Mammary epithelial cell (primary cell): ENCODE measurements at regions of chr4 and their contacts with region 1.

Region 1: GRCh38 chr4:54233277-54233696 is 4.2 kb downstream of the PDGFRA start:
- DNase-seq: peak; percentile 81
- H3K4me3 ChIP-seq: peak overlapping the region; percentile 30 to 54 (median 52)
- H3K27ac ChIP-seq: no peak overlapping the region
- H3K4me1 ChIP-seq: peaks cover 21% of the 10 kb centered on the region
- H3K27me3 ChIP-seq: peaks cover 24% of the 10 kb centered on the region
- CTCF ChIP-seq: peak; percentile 36 to 88

Region 2: DNA sequence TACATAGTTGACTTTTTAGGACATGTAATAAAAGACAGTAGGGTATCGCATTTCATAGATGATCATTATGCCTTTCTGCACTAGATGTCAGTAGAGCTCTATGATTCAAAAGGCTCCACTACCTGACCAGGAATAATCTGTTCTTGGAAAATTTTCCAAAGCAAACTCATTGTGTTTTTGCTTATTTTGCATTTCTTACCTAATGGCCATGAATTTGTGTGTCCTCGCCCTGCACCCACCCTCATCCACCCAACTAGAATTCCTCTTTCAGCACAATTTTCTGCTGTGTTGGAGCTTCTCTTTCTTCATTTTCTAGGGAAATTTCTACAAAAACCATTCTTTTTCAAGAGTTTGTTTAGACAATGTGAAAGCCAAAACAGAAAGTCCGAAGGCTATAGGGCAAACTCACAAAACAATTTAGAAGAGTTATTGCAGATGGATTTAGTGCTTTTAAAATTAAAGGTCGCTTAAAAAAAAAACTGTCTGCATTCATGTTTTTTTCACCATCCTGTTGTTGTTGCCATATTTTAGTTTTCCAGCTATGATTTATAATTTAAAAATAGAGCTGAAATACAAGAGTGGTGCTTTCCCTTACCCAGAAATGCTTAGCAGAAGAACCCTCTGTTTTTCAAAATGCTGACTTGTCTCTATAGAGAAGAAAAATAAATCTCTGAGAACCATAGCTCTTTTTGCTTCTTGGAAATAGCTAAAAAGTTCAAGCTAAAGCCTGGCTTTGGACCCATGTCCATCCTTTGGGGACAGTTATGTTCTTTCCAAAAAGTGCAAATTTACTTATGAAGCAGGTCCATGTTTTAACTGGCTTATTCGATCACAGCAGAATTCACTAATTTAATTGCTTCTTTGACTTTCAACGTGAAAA is 1998.5 kb before region 1 on chr4:
- CTCF ChIA-PET with region 1: no interaction called
- dilution Hi-C with region 1: no loop called
- in situ Hi-C with region 1: loop called (anchors 25 kb)
- intact Hi-C with region 1: no loop called
- DNase-seq: peak; percentile 41
- H3K4me3 ChIP-seq: no peak overlapping the region
- H3K27ac ChIP-seq: no peak overlapping the region
- H3K4me1 ChIP-seq: no peaks in the 10 kb centered on the region
- H3K27me3 ChIP-seq: peaks cover 5% of the 10 kb centered on the region
- CTCF ChIP-seq: peak; percentile 58 to 68

Region 3: DNA sequence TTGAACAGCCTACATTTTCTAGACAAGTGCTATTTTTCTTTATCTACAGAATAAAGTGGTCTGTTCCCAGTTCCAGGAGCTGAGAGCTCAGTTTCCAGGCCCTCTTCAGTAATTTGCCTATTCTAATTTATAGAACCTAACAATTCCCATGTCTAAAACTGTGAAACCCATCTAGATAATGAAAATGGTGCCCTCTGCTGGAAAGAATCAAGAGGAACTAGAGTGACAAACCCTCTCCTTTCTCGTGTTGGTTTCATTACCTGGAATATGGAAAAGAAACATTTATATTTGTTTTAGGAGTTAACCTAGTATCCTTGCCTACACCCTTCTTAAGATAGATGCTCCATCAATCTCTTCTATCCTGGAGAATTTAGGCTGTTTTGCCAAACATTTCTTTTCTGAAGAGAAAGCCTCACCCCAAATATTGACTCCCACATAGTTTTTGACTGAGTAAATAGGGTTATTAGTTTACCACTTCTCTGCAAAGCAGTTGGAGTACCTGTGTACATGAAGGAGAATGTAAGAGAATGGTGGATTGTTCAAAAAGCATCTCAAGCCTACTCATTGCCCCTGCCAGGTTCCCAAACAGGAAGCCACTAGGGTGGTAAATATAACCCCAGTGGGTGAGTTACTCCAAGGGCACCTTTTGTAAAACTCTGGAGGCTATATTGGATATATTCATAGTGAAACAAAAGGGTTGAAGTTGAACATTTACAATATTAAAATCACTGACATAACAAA is 1249.6 kb before region 1 on chr4:
- CTCF ChIA-PET with region 1: interaction called, 4 read pairs
- dilution Hi-C with region 1: no loop called
- in situ Hi-C with region 1: no loop called
- intact Hi-C with region 1: loop called (anchors 1 kb)
- DNase-seq: peak; percentile 42
- H3K4me3 ChIP-seq: no peak overlapping the region
- H3K27ac ChIP-seq: no peak overlapping the region
- H3K4me1 ChIP-seq: peaks cover 10% of the 10 kb centered on the region
- H3K27me3 ChIP-seq: no peaks in the 10 kb centered on the region
- CTCF ChIP-seq: peak; percentile 58 to 64

Region 4: GRCh38 chr4:53377319-53378170 is 855.7 kb before region 1 on chr4 and contains the start of gene FIP1L1:
- CTCF ChIA-PET with region 1: interaction called, 3 read pairs
- dilution Hi-C with region 1: no loop called
- in situ Hi-C with region 1: no loop called
- intact Hi-C with region 1: loop called (anchors 5 kb)
- DNase-seq: peak; percentile 85
- H3K4me3 ChIP-seq: peak within 1 kb of the TSS; percentile 71 to 93 (median 88)
- H3K27ac ChIP-seq: peak within 1 kb of the TSS; percentile 70
- H3K4me1 ChIP-seq: no peaks in the 10 kb centered on the region
- H3K27me3 ChIP-seq: no peaks in the 10 kb centered on the region
- CTCF ChIP-seq: peak in 1 of 2 donors; percentile 3
- total RNA-seq, gene FIP1L1: 42.3 to 70.8 TPM

Region 5: GRCh38 chr4:53592686-53593501 is 640.4 kb before region 1 on chr4:
- CTCF ChIA-PET with region 1: no interaction called
- dilution Hi-C with region 1: no loop called
- in situ Hi-C with region 1: loop called in 1 of 2 experiments (anchors 25 kb)
- intact Hi-C with region 1: no loop called
- DNase-seq: peak; percentile 73
- H3K4me3 ChIP-seq: peak overlapping the region; percentile 17 to 27 (median 27)
- H3K27ac ChIP-seq: peak overlapping the region; percentile 71
- H3K4me1 ChIP-seq: peaks cover 41% of the 10 kb centered on the region
- H3K27me3 ChIP-seq: no peaks in the 10 kb centered on the region
- CTCF ChIP-seq: no peak

Region 6: GRCh38 chr4:53804719-53805118 is 428.6 kb before region 1 on chr4:
- CTCF ChIA-PET with region 1: no interaction called
- dilution Hi-C with region 1: no loop called
- in situ Hi-C with region 1: no loop called
- intact Hi-C with region 1: loop called (anchors 5 kb)
- DNase-seq: peak; percentile 17
- H3K4me3 ChIP-seq: no peak overlapping the region
- H3K27ac ChIP-seq: no peak overlapping the region
- H3K4me1 ChIP-seq: no peaks in the 10 kb centered on the region
- H3K27me3 ChIP-seq: no peaks in the 10 kb centered on the region
- CTCF ChIP-seq: peak; percentile 81 to 83

Region 7: DNA sequence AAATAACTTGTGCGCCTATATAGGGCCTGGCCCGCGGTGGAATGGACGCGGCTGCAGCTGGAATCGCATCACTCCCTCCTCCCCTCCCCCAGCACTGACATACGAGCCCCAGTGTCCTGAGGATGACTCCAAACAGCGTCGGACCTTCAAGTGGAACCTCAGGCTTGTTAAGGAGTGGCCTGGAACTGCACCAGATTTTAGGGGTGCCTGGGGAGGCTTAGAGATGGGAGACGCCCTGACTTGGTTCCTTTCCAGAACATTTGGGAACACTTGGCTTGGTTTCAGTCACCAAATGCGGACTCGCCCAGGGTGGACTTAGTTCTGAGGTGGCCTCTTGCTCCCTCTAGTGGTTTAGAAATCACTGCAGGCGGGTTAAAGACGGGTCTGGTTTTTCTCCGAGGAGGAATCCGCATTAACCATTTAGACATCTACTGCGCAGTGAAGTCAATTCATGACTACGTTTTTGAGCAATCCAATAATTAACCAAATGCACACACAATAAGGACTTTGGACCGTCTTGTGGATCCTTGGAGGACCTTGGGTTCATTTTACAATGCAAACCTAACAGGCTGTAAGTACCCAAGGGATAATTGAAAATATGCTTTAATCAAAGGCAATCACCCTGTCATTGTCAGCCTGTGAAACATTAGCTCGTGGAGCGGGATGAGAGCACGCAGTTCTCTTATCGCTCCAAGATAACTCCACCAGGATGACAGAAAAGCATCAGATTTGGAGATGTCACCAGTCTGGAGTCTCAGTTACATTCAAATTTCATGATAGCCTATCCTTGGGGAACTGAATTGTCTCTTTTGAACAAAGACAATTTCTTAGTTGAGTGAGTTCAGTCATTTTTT is 15.4 kb before region 1 on chr4:
- CTCF ChIA-PET with region 1: interaction called, 21 read pairs
- dilution Hi-C with region 1: no loop called
- in situ Hi-C with region 1: no loop called
- intact Hi-C with region 1: no loop called
- DNase-seq: peak; percentile 82
- H3K4me3 ChIP-seq: peak overlapping the region; percentile 23 to 52 (median 34)
- H3K27ac ChIP-seq: peak overlapping the region; percentile 22
- H3K4me1 ChIP-seq: no peaks in the 10 kb centered on the region
- H3K27me3 ChIP-seq: no peaks in the 10 kb centered on the region
- CTCF ChIP-seq: peak; percentile 73 to 92